CD4-positive, alpha-beta T cell (primary cell): ENCODE measurements at regions of chr5 and their contacts with region 1.

Region 1: DNA sequence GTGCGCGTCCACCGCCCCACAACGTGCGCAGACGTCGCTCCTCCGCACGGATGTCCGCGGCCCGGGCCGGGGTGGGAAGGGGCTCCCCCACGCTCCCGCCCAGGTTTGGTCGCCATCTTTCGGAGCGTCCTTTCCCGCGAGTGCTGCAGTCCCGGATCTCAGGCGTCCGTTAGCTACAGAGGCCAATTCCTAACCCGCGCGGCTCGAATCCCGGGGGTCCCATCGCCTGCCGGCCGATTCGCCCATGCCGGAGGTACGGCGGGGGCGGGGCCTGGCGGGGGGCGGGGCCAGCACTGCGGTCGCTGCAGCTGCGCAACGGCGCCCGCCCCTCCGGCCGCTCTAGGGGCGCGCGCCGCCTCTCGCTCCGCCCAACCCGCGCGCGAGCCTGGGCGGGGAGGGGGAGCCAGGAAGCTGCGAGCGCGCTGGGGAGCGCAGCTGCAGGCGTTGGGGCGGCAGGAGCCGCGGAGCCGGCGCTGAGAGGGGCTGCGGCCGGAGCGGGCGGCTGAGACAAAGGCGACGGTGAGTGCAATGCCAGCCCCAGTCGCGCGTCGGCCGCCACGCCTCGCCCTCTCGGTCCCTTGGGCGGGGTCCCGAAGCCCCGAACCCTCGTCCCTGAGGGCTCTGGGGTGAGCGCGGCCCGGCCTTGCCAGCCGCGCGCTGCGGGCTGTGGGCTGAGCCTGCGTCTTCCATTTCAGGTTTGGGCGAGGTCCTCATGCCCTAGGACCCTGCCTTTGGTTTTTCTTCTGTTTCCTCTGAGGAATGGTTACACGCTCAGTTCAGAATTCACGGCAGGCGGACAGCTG is at the start of gene CDC42SE2:
- DNase-seq: peak; percentile 72 to 95 (median 84)
- ATAC-seq: peak; percentile 86
- H3K4me3 ChIP-seq: peak within 1 kb of the TSS; percentile 97
- H3K4me3 Mint-ChIP-seq: peak within 1 kb of the TSS; percentile 94
- H3K27ac ChIP-seq: peak within 1 kb of the TSS; percentile 87 to 95
- H3K27ac Mint-ChIP-seq: peak within 1 kb of the TSS; percentile 99
- H3K4me1 ChIP-seq: peaks cover 35% of the 10 kb centered on the region
- H3K4me1 Mint-ChIP-seq: peaks cover 46% of the 10 kb centered on the region
- H3K27me3 ChIP-seq: no peaks in the 10 kb centered on the region
- H3K27me3 Mint-ChIP-seq: no peaks in the 10 kb centered on the region
- CTCF ChIP-seq: no peak
- total RNA-seq, gene CDC42SE2: 218 to 230 TPM

Region 2: DNA sequence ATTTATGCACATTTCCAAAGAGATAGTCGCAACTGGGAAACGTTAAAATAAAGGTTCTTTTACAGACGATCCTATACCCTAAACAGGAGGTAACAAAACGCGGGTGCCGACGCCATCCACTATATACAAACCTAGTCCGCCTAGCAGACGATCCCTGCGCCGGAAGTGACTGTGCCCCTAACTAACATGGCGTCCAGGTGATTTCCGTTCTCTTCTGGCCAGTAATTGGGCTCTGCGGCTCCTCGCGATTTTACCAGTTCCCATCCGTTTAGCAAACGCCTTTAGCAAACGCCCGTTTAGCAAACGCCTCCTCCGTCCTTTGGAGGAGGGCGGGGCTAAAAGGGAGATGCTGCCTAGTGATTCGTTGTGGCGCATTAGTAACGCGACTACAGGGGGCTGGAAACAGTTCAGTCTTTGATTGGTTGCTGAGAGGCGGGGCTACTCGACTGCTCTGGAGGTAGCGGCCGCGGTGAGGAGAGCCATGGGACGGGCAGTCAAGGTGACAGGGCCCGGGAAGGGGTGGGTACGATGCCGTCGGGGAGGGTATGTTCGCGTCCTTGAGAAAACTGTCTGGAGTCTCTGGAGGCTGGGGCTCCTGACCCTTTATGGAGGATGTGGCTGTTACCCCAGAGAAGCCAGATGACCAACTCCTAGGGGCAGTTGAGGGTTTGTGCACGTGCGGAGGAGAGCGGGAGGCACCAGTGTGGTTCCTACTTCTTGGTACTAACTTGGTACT is 93.1 kb before region 1 on chr5 and contains the start of gene LYRM7:
- CTCF ChIA-PET with region 1: interaction called, 3 read pairs
- POLR2A ChIA-PET with region 1: interaction called, 29 read pairs
- intact Hi-C with region 1: loop called in 1 of 2 experiments (anchors 2 kb)
- DNase-seq: peak; percentile 88 to 99 (median 92)
- ATAC-seq: peak; percentile 94
- H3K4me3 ChIP-seq: peak within 1 kb of the TSS; percentile 73
- H3K4me3 Mint-ChIP-seq: peak within 1 kb of the TSS; percentile 98
- H3K27ac ChIP-seq: peak within 1 kb of the TSS; percentile 70 to 74
- H3K27ac Mint-ChIP-seq: peak within 1 kb of the TSS; percentile 94
- H3K4me1 ChIP-seq: peaks cover 16% of the 10 kb centered on the region
- H3K4me1 Mint-ChIP-seq: peaks cover 55% of the 10 kb centered on the region
- H3K27me3 ChIP-seq: no peaks in the 10 kb centered on the region
- H3K27me3 Mint-ChIP-seq: no peaks in the 10 kb centered on the region
- CTCF ChIP-seq: no peak
- total RNA-seq, gene LYRM7: 8.3 to 11.9 TPM

Region 3: GRCh38 chr5:131281133-131281867 is 17.5 kb after region 1 on chr5:
- CTCF ChIA-PET with region 1: interaction called, 19 read pairs
- POLR2A ChIA-PET with region 1: interaction called, 390 read pairs
- intact Hi-C with region 1: loop called (anchors 1 to 2 kb)
- DNase-seq: peak in 3 of 14 experiments; percentile 84 to 91 (median 90)
- ATAC-seq: peak; percentile 81
- H3K4me3 ChIP-seq: peak overlapping the region; percentile 52
- H3K4me3 Mint-ChIP-seq: peak overlapping the region; percentile 74
- H3K27ac ChIP-seq: peak overlapping the region; percentile 39 to 76
- H3K27ac Mint-ChIP-seq: peak overlapping the region; percentile 77
- H3K4me1 ChIP-seq: peaks cover 60% of the 10 kb centered on the region
- H3K4me1 Mint-ChIP-seq: peaks cover 80% of the 10 kb centered on the region
- H3K27me3 ChIP-seq: no peaks in the 10 kb centered on the region
- H3K27me3 Mint-ChIP-seq: no peaks in the 10 kb centered on the region
- CTCF ChIP-seq: no peak

Region 4: DNA sequence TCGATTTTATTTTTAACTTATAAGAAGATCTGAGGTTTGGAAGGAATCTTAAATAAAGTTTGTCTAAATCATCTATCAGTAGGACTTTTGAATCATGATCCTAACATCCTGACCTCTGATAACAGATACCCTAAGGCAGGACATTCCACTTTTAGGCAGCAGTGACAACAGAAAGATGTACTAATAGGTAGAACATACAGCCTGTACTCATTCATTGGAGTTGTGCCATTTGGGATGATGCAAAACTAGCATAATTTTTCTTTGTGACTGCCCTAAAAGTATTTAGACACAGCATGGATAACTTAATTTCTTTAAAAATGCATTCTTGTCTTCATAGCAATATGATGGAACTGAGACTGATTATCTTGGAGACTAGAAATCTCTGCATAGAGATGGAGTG is 39.7 kb after region 1 on chr5:
- CTCF ChIA-PET with region 1: no interaction called
- POLR2A ChIA-PET with region 1: interaction called, 8 read pairs
- intact Hi-C with region 1: loop called in 1 of 2 experiments (anchors 5 kb)
- DNase-seq: no peak
- ATAC-seq: no peak
- H3K4me3 ChIP-seq: no peak overlapping the region
- H3K4me3 Mint-ChIP-seq: no peak overlapping the region
- H3K27ac ChIP-seq: no peak overlapping the region
- H3K27ac Mint-ChIP-seq: peak overlapping the region; percentile 50
- H3K4me1 ChIP-seq: peaks cover 40% of the 10 kb centered on the region
- H3K4me1 Mint-ChIP-seq: peaks cover 78% of the 10 kb centered on the region
- H3K27me3 ChIP-seq: no peaks in the 10 kb centered on the region
- H3K27me3 Mint-ChIP-seq: no peaks in the 10 kb centered on the region
- CTCF ChIP-seq: no peak

Region 5: GRCh38 chr5:131328536-131329285 is 64.9 kb after region 1 on chr5:
- CTCF ChIA-PET with region 1: no interaction called
- POLR2A ChIA-PET with region 1: interaction called, 11 read pairs
- intact Hi-C with region 1: no loop called
- DNase-seq: no peak
- ATAC-seq: peak; percentile 24
- H3K4me3 ChIP-seq: no peak overlapping the region
- H3K4me3 Mint-ChIP-seq: peak overlapping the region; percentile 26
- H3K27ac ChIP-seq: no peak overlapping the region
- H3K27ac Mint-ChIP-seq: peak overlapping the region; percentile 26
- H3K4me1 ChIP-seq: peaks cover 31% of the 10 kb centered on the region
- H3K4me1 Mint-ChIP-seq: peaks cover 84% of the 10 kb centered on the region
- H3K27me3 ChIP-seq: no peaks in the 10 kb centered on the region
- H3K27me3 Mint-ChIP-seq: no peaks in the 10 kb centered on the region
- CTCF ChIP-seq: no peak

Region 6: DNA sequence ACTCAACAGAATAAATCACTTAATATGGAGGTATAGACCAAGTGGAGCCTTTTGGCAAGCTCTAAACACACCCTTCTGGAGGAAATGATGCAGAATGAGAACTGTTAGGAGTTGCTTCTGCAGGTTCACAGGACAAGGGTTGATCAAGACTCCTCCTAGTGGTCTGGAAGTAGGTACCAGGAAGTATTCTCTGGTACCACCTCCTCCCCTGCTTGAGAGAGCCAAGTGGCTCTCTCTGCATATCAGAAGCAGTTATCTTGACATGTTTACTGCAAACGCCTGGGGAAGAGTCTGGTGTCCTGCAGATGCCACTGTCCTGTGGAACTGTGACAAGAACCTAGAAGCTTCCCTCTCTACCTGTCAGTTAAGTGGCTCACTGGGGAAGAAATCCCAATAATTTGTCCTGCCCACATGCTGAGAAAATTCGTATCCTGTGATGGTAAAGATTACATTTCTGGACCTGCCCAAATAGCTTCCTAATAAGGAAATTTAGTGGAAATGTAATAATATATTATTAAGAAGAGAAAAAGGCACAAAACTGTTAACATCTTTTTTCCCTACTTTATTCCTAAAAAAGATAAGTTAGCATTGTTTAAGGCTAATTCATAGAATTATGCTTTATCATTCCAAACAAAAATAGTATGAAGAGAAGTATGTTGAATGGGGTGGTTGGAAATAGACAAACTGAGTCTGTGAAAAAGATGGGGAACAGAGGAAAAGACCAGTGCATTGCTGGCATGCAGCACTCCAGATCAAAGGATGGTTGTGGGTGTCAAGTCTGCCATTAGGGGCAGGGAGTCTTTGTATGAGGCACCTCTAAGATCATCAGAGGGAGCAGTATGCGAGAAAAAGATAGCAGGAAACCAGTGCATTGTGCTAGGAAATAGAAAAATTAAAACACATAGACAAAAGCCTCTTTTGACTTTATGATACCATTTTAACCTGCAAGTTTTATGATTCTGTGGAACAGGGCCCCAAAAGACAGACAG is 118.9 kb after region 1 on chr5:
- CTCF ChIA-PET with region 1: interaction called, 34 read pairs
- POLR2A ChIA-PET with region 1: interaction called, 395 read pairs
- intact Hi-C with region 1: loop called in 1 of 2 experiments (anchors 5 kb)
- DNase-seq: peak in 11 of 14 experiments; percentile 16 to 94 (median 52)
- ATAC-seq: peak; percentile 66
- H3K4me3 ChIP-seq: no peak overlapping the region
- H3K4me3 Mint-ChIP-seq: peak overlapping the region; percentile 66
- H3K27ac ChIP-seq: peak overlapping the region; percentile 97 to 99
- H3K27ac Mint-ChIP-seq: peak overlapping the region; percentile 97
- H3K4me1 ChIP-seq: peaks cover 62% of the 10 kb centered on the region
- H3K4me1 Mint-ChIP-seq: peaks cover 94% of the 10 kb centered on the region
- H3K27me3 ChIP-seq: no peaks in the 10 kb centered on the region
- H3K27me3 Mint-ChIP-seq: no peaks in the 10 kb centered on the region
- CTCF ChIP-seq: peak; percentile 68